Ascending aorta (tissue), 2 donors: ENCODE measurements at regions of chr5 and their contacts with region 1.

Region 1: GRCh38 chr5:38615981-38616451 is 59.6 kb upstream of the LIFR start:
- DNase-seq: no peak
- H3K4me3 ChIP-seq: no peak overlapping the region
- H3K27ac ChIP-seq: no peak overlapping the region
- H3K4me1 ChIP-seq: no peaks in the 10 kb centered on the region
- H3K27me3 ChIP-seq: no peaks in the 10 kb centered on the region
- CTCF ChIP-seq: no peak

Region 2: DNA sequence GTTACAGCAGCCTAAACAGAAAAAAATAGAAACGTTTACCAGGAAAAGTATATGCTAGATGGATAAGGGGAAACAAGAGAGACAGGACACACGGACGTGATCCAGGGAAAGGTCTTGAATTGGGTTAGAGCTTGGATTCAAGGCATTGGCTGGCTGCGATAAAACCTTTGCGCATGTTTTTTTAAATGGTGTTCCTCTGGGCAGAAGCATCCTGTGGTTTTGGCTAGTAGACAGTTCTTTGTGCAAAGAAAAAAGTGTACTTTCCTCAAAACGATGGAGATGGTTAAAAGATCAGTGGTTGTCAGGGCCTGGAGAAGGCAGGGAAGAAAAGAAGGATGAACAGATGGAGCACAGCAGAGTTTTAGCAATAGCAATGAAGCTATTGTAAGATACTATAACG is 22.1 kb before region 1 on chr5:
- intact Hi-C with region 1: loop called (anchors 1 kb)
- DNase-seq: no peak
- H3K4me3 ChIP-seq: no peak overlapping the region
- H3K27ac ChIP-seq: no peak overlapping the region
- H3K4me1 ChIP-seq: peaks cover 0 to 3% of the 10 kb centered on the region in 2 donors
- H3K27me3 ChIP-seq: no peaks in the 10 kb centered on the region
- CTCF ChIP-seq: no peak

Region 3: DNA sequence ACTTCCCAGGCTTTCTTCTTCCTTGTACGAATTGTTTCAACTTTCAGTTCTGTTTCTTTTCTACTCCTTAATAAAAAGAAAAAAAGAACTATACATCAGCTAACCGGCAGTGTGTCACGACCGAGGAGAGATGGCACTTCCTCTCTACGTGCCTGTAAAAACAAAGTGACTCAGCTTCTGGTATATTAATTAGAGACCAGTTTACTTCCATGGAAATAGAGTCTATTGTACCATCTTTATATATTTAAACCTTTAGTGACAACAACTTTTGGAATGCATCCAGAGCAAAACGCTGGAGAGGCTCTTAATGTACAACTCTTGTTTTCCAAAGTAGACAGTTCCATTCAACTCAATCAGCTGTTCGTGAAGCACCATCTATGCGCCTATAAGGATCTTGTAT is 34.9 kb after region 1 on chr5:
- intact Hi-C with region 1: no loop called
- DNase-seq: no peak
- H3K4me3 ChIP-seq: peak overlapping the region; percentile 6 to 14
- H3K27ac ChIP-seq: no peak overlapping the region
- H3K4me1 ChIP-seq: no peaks in the 10 kb centered on the region
- H3K27me3 ChIP-seq: no peaks in the 10 kb centered on the region
- CTCF ChIP-seq: no peak